B cell (primary cell): ENCODE measurements at regions of chr19 and their contacts with region 1.

Region 1: DNA sequence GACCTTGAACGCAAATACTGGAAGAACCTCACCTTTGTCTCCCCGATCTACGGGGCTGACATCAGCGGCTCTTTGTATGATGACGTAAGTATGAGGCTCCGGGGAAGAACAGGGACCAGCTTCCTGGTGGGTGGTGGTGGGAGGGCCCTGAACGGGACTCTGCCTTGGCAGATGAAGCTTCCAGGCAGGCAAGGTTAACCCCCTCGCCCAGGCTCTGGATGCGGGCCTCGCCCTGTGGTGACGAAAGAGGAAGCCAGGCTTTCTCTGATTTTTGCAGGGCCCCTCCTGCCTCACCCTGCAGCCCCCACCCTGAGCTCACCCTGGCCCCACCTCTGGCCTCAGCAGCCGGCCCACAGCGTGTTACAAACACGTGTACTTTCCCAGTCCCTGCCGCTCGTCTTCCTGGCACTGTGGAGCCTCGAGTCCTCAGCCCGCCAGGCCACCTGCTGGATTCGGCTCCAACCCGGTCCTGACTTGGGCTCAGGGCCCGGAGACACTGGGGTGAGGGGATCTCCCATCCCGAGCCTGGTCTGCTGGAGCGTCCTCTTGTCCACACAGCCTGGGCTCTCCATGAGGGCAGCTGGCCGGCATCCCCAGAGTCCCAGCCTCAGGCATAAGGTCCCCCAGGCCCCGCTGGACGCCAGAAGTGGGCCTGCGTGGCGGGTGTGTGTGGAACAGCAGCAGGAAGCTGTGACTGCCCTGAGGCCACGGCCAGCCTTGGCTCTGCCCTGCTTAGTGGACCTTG is 72.4 kb downstream of the KDM4B start:
- DNase-seq: no peak
- ATAC-seq: no peak
- H3K4me3 ChIP-seq: no peak overlapping the region
- H3K4me3 Mint-ChIP-seq: no peak overlapping the region
- H3K27ac ChIP-seq: no peak overlapping the region
- H3K27ac Mint-ChIP-seq: no peak overlapping the region
- H3K4me1 ChIP-seq: no peaks in the 10 kb centered on the region
- H3K4me1 Mint-ChIP-seq: peaks cover 2% of the 10 kb centered on the region
- H3K27me3 ChIP-seq: no peaks in the 10 kb centered on the region
- H3K27me3 Mint-ChIP-seq: no peaks in the 10 kb centered on the region
- CTCF ChIP-seq: no peak

Region 2: GRCh38 chr19:5078182-5078581 is 36.8 kb after region 1 on chr19:
- CTCF ChIA-PET with region 1: no interaction called
- POLR2A ChIA-PET with region 1: no interaction called
- intact Hi-C with region 1: no loop called
- DNase-seq: no peak
- ATAC-seq: no peak
- H3K4me3 ChIP-seq: no peak overlapping the region
- H3K4me3 Mint-ChIP-seq: no peak overlapping the region
- H3K27ac ChIP-seq: no peak overlapping the region
- H3K27ac Mint-ChIP-seq: peak overlapping the region; percentile 37
- H3K4me1 ChIP-seq: peaks cover 19 to 40% of the 10 kb centered on the region in 2 donors
- H3K4me1 Mint-ChIP-seq: peaks cover 18% of the 10 kb centered on the region
- H3K27me3 ChIP-seq: no peaks in the 10 kb centered on the region
- H3K27me3 Mint-ChIP-seq: no peaks in the 10 kb centered on the region
- CTCF ChIP-seq: no peak

Region 3: DNA sequence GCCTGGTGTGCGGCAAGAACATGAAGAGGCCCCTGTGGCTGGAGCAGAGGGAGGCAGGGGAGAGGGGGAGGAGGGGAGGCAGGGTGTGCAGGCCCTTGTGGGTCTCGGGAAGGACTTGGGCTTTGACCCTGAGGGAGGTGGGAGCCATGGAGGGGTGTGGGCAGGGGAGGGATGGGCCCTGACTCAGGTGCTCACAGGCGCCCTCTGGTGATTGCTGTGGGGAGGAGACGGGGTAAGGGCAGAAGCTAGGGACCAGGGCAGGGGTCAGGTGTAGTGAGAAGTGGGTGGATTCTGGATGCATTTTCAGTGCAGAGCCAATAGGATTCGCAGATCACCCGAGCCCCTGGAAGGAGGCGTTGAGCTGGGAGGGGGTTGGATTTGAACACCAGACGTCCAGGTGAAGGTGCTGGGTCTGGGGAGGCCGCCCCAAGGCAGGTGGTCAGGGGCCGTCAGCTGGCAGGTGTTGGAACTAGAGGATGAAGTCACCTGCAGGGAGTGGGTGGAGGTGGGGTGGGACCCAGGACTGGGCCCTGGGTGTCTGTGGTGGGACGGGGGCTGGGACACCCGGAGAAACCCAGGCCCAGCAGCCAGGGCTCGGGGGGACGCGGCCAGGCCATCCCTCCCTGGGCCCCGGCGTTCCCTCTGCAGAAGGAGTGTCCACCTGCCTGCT is 112.9 kb after region 1 on chr19:
- CTCF ChIA-PET with region 1: interaction called, 102 read pairs
- POLR2A ChIA-PET with region 1: interaction called, 10 read pairs
- intact Hi-C with region 1: no loop called
- DNase-seq: peak; percentile 76
- ATAC-seq: peak; percentile 69
- H3K4me3 ChIP-seq: no peak overlapping the region
- H3K4me3 Mint-ChIP-seq: no peak overlapping the region
- H3K27ac ChIP-seq: no peak overlapping the region
- H3K27ac Mint-ChIP-seq: peak overlapping the region; percentile 67
- H3K4me1 ChIP-seq: peaks cover 0 to 9% of the 10 kb centered on the region in 2 donors
- H3K4me1 Mint-ChIP-seq: peaks cover 13% of the 10 kb centered on the region
- H3K27me3 ChIP-seq: no peaks in the 10 kb centered on the region
- H3K27me3 Mint-ChIP-seq: no peaks in the 10 kb centered on the region
- CTCF ChIP-seq: peak; percentile 72